ENCODE measurements at regions of chr15 and their contacts with region 1.

Region 1: GRCh38 chr15:40382580-40383456 is at the start of gene KNSTRN:
- DNase-seq: peak; percentile 90 to 96 (median 92)
- ATAC-seq: peak; percentile 97
- H3K4me3 ChIP-seq: peak within 1 kb of the TSS; percentile 85
- H3K27ac ChIP-seq: peak within 1 kb of the TSS; percentile 71
- H3K4me1 ChIP-seq: peaks cover 21 to 30% of the 10 kb centered on the region in 2 experiments; a peak in 4 of 5 replicates
- H3K27me3 ChIP-seq: no peaks in the 10 kb centered on the region
- CTCF ChIP-seq: no peak; a peak in 1 of 6 replicates
- EP300 ChIP-seq: peak; percentile 37; the same call in 1 of the 2 replicates
- POLR2A ChIP-seq: peak; percentile 88
- RAD21 ChIP-seq: no peak
- polyA plus RNA-seq, gene KNSTRN: 48.7 to 66.3 TPM

Region 2: GRCh38 chr15:40367686-40368611 is 14.9 kb before region 1 on chr15:
- CTCF ChIA-PET with region 1: no interaction called
- POLR2A ChIA-PET with region 1: interaction called, 13 read pairs
- in situ Hi-C with region 1: no loop called
- intact Hi-C with region 1: no loop called
- DNase-seq: peak; percentile 89 to 93 (median 92)
- ATAC-seq: peak; percentile 92
- H3K4me3 ChIP-seq: peak overlapping the region; percentile 22; the same call in 1 of the 2 replicates
- H3K27ac ChIP-seq: no peak overlapping the region
- H3K4me1 ChIP-seq: peaks cover 9 to 47% of the 10 kb centered on the region in 2 experiments
- H3K27me3 ChIP-seq: peaks cover 0 to 16% of the 10 kb centered on the region in 2 experiments; a peak in 3 of 5 replicates
- CTCF ChIP-seq: peak; percentile 82 to 98 (median 94)
- EP300 ChIP-seq: peak; percentile 19; the same call in 1 of the 2 replicates
- POLR2A ChIP-seq: no peak
- RAD21 ChIP-seq: peak in 1 of 2 experiments; percentile 77; a peak in 3 of 4 replicates

Measured in K562 (cell line).